SK-N-SH (cell line): ENCODE measurements at regions of chr3 and their contacts with region 1.

Region 1: DNA sequence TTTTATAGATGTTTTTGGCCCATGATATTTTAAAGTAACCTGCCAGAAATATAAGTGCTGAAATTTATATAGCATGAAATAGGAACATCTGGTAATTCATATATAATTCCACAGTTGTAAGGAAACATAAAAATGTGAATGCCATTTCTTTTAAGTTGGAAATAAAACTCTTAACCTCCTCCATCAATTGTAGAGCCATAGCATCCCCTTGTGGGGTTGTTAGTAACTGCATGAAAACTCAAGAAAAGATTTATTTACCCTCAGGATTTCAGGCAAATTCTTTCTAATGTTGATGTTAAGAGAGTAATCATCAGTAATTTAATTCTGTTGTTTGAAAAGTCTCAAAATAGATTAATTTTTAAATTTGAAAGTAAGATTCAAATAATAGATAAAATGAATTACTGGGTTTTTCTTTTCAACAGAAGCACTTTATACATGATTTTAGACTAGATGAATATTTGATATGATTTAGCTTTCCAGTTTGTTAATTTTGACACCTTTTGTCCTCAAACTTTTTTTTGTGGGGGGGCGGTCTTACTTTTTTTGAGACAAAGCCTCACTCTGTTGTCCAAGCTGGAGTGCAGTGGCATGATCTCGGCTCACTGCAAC is 74.7 kb downstream of the RASA2 start:
- DNase-seq: peak; percentile 47
- H3K4me3 ChIP-seq: no peak overlapping the region; a peak in 1 of 4 replicates
- H3K27ac ChIP-seq: no peak overlapping the region
- H3K4me1 ChIP-seq: peaks cover 0 to 18% of the 10 kb centered on the region in 2 experiments; a peak in 1 of 4 replicates
- H3K27me3 ChIP-seq: no peaks in the 10 kb centered on the region
- CTCF ChIP-seq: peak; percentile 99
- EP300 ChIP-seq: no peak
- RAD21 ChIP-seq: peak; percentile 98

Region 2: GRCh38 chr3:141020143-141020830 is 541.2 kb before region 1 on chr3:
- CTCF ChIA-PET with region 1: no interaction called
- POLR2A ChIA-PET with region 1: no interaction called
- DNase-seq: no peak
- H3K4me3 ChIP-seq: no peak overlapping the region
- H3K27ac ChIP-seq: no peak overlapping the region
- H3K4me1 ChIP-seq: no peaks in the 10 kb centered on the region
- H3K27me3 ChIP-seq: no peaks in the 10 kb centered on the region
- CTCF ChIP-seq: no peak
- EP300 ChIP-seq: no peak
- RAD21 ChIP-seq: no peak

Region 3: GRCh38 chr3:141465221-141465620 is 96.3 kb before region 1 on chr3:
- CTCF ChIA-PET with region 1: interaction called, 102 read pairs
- POLR2A ChIA-PET with region 1: no interaction called
- DNase-seq: peak; percentile 24
- H3K4me3 ChIP-seq: no peak overlapping the region
- H3K27ac ChIP-seq: no peak overlapping the region
- H3K4me1 ChIP-seq: no peaks in the 10 kb centered on the region
- H3K27me3 ChIP-seq: no peaks in the 10 kb centered on the region
- CTCF ChIP-seq: peak; percentile 44
- EP300 ChIP-seq: no peak
- RAD21 ChIP-seq: peak; percentile 65

Region 4: DNA sequence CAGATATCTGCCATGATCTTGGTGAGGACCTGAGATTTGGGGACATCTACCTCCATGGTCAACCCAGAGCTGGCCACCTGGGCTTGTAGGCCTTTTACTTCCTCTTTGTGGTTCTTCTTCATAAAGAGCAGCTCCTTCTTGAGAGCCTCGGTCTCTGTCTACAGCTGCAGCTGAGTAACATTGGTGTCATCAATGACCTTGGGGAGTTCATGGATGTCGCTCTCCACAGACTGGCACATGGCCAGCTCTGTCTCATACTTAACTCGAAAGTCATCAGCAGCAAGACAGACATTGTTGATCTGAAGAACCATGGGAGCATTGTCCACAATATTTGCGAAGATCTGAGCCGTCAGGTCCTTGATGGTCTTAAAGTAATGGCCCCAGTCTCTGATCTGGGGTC is 90.4 kb before region 1 on chr3:
- CTCF ChIA-PET with region 1: interaction called, 62 read pairs
- POLR2A ChIA-PET with region 1: no interaction called
- DNase-seq: no peak
- H3K4me3 ChIP-seq: no peak overlapping the region
- H3K27ac ChIP-seq: no peak overlapping the region
- H3K4me1 ChIP-seq: no peaks in the 10 kb centered on the region; a peak in 1 of 4 replicates
- H3K27me3 ChIP-seq: no peaks in the 10 kb centered on the region
- CTCF ChIP-seq: no peak
- EP300 ChIP-seq: no peak
- RAD21 ChIP-seq: no peak

Region 5: DNA sequence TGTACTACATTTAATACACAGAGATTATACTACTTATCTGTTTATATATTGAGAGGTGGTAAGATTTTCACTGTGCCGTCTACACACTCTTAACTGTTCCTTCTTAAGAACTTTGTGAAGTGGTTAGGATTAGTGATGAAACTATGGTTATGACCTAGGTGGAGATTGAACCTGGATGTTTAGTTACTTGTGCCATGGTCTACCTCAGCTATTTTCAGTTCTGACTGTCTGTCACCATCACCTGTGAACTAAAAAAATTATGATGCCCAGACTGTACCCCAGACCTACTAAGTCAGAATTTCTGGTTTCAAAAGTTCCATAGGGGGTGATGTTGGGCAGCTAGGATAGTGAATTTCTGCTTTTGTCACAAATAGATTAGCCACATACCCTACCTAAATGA is 68.3 kb before region 1 on chr3:
- CTCF ChIA-PET with region 1: interaction called, 12 read pairs
- POLR2A ChIA-PET with region 1: no interaction called
- DNase-seq: no peak
- H3K4me3 ChIP-seq: no peak overlapping the region
- H3K27ac ChIP-seq: no peak overlapping the region
- H3K4me1 ChIP-seq: peaks cover 2 to 23% of the 10 kb centered on the region in 2 experiments; a peak in 3 of 4 replicates
- H3K27me3 ChIP-seq: no peaks in the 10 kb centered on the region
- CTCF ChIP-seq: no peak
- EP300 ChIP-seq: no peak
- RAD21 ChIP-seq: no peak

Region 6: DNA sequence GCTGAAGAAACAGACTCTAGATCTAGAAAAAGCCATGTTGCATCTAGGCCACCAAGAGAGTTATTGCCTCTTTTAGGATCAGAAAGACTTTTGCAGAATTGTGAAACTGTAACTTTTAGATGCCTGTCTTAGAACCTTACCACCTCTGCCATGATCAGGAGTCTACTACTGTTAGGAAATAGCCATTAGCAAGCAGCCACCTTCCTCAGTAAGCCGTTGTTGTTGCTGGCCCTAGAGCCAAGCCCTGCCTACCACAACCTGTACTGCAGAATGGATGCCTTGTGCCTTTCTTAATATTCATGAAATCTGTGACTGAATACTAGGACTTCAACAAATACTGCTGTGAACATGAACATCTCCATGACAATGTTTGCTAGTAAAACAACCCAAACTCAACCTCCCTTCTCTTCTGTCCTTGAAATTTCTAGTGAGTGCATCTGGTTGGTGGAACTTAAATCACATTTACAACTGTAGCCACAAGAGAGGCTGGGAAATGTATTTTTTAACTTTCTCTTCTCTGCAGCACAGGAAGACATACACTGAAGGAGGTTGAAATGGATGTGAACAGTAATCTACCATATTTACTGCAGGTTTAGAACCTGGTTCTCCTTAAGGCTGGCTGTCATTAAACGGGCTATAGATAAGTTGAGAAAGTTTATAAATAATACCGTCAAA is 54.0 kb before region 1 on chr3:
- CTCF ChIA-PET with region 1: no interaction called
- POLR2A ChIA-PET with region 1: no interaction called
- DNase-seq: no peak
- H3K4me3 ChIP-seq: no peak overlapping the region
- H3K27ac ChIP-seq: no peak overlapping the region
- H3K4me1 ChIP-seq: no peaks in the 10 kb centered on the region
- H3K27me3 ChIP-seq: no peaks in the 10 kb centered on the region
- CTCF ChIP-seq: no peak
- EP300 ChIP-seq: no peak
- RAD21 ChIP-seq: no peak

Region 7: GRCh38 chr3:141575879-141576743 is 14.6 kb after region 1 on chr3:
- CTCF ChIA-PET with region 1: interaction called, 16 read pairs
- POLR2A ChIA-PET with region 1: no interaction called
- DNase-seq: peak; percentile 16
- H3K4me3 ChIP-seq: no peak overlapping the region
- H3K27ac ChIP-seq: no peak overlapping the region
- H3K4me1 ChIP-seq: no peaks in the 10 kb centered on the region
- H3K27me3 ChIP-seq: no peaks in the 10 kb centered on the region
- CTCF ChIP-seq: peak; percentile 71
- EP300 ChIP-seq: no peak
- RAD21 ChIP-seq: peak; percentile 60